ENCODE measurements at regions of chrX and their contacts with region 1.

Region 1: DNA sequence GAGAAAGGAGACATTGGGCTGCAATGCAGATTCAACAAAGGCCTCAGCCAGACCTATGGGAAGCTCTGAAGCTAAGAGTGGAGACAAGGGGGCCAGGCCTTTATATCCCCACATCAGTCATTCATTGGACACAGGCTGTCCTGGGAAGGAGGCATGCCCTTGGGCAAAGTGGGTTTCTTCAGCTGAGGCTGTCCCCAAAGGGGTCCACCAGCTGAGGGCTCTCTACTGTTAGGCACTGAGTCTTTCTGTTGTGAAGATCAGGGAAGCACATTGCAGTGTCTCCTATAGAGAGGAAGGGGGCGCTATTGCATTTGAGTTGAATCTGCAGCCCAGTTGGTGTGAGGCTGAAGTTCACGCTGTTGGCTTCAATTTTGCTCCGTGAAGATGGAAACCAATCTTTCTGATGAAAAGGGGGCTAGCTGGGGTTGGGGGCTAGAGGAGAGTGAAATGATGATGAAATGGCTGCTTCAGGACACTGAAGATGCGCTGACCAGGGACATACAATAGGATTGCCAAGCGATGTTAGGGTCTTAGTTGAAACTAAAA is 48.0 kb downstream of the SLC25A5 start:
- DNase-seq: peak in 8 of 9 experiments; percentile 6 to 75 (median 34)
- ATAC-seq: peak; percentile 96
- H3K4me3 ChIP-seq: no peak overlapping the region
- H3K4me3 Mint-ChIP-seq: no peak overlapping the region
- H3K27ac ChIP-seq: no peak overlapping the region
- H3K27ac Mint-ChIP-seq: no peak overlapping the region
- H3K4me1 ChIP-seq: no peaks in the 10 kb centered on the region
- H3K4me1 Mint-ChIP-seq: peaks cover 2% of the 10 kb centered on the region
- H3K27me3 ChIP-seq: no peaks in the 10 kb centered on the region
- H3K27me3 Mint-ChIP-seq: no peaks in the 10 kb centered on the region
- CTCF ChIP-seq: peak; percentile 64

Region 2: DNA sequence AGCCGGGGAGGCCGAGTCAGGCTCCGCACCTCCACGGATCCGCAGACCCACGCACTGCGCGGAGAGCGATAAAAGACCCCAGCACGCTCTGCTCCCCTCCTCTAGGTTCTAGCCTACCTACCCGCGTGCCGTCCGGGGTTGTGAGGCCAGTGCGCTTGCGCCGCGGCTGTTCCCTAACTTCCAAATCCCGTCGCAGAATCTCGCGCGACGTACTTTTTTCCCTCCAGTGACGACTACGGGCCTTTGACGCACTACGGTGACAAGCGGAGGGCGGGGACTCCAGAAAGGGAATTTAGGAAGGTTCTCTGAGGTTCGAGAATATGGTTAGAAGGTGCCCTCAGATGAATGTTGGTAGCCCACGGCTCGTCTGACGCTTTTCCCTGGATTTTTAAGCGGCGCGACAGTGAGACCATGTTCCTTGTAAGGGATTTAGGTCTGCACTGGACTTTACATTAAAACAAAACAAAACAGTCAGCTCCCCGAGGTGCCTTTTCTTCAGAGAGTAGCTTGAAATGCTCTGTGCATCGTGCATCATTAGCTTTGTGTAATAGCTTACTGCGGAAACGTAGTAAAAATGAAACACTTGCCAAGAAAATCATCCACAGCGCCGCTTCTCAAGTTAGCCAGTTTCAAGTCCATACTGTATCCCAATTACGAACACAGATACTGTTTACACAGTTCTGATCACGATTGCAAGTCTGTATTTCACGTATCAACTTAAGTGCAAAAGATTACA is 90.2 kb after region 1 on chrX and contains the start of gene NKRF:
- CTCF ChIA-PET with region 1: no interaction called
- POLR2A ChIA-PET with region 1: no interaction called
- intact Hi-C with region 1: loop called in 1 of 2 experiments (anchors 10 kb)
- DNase-seq: peak; percentile 79 to 96 (median 88)
- ATAC-seq: peak; percentile 76
- H3K4me3 ChIP-seq: peak within 1 kb of the TSS; percentile 89 to 90
- H3K4me3 Mint-ChIP-seq: peak within 1 kb of the TSS; percentile 87
- H3K27ac ChIP-seq: peak within 1 kb of the TSS; percentile 94 to 96
- H3K27ac Mint-ChIP-seq: peak within 1 kb of the TSS; percentile 97
- H3K4me1 ChIP-seq: peaks cover 7% of the 10 kb centered on the region
- H3K4me1 Mint-ChIP-seq: peaks cover 39% of the 10 kb centered on the region
- H3K27me3 ChIP-seq: no peaks in the 10 kb centered on the region
- H3K27me3 Mint-ChIP-seq: no peaks in the 10 kb centered on the region
- CTCF ChIP-seq: no peak
- total RNA-seq, gene NKRF: 18.3 to 20.5 TPM

Region 3: DNA sequence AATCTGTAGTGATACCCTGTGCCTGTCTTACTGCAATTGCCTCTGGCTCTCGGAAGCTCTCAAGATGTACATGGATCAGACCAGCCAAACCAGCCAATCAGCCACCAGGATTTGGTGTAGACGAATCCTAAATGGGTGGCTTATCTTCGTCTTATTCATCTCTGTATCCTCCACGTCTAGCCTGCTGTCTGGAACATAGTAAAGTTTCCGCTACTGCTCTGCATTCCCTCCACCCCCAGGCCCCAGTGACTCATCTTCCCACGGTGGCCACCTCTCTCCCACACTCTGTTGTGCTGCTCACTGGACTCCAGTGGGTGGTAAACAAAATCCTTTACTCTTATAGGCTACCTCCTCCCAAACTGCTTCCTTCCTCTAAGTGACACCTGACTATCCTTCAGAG is 138.9 kb after region 1 on chrX:
- CTCF ChIA-PET with region 1: no interaction called
- POLR2A ChIA-PET with region 1: no interaction called
- intact Hi-C with region 1: loop called in 1 of 2 experiments (anchors 5 kb)
- DNase-seq: peak in 7 of 9 experiments; percentile 12 to 48 (median 27)
- ATAC-seq: peak; percentile 32
- H3K4me3 ChIP-seq: no peak overlapping the region
- H3K4me3 Mint-ChIP-seq: peak overlapping the region; percentile 26
- H3K27ac ChIP-seq: no peak overlapping the region
- H3K27ac Mint-ChIP-seq: peak overlapping the region; percentile 87
- H3K4me1 ChIP-seq: peaks cover 21% of the 10 kb centered on the region
- H3K4me1 Mint-ChIP-seq: peaks cover 26% of the 10 kb centered on the region
- H3K27me3 ChIP-seq: no peaks in the 10 kb centered on the region
- H3K27me3 Mint-ChIP-seq: no peaks in the 10 kb centered on the region
- CTCF ChIP-seq: no peak

Region 4: GRCh38 chrX:119784747-119785446 is 268.7 kb after region 1 on chrX:
- CTCF ChIA-PET with region 1: interaction called, 3 read pairs
- POLR2A ChIA-PET with region 1: no interaction called
- intact Hi-C with region 1: loop called in 1 of 2 experiments (anchors 2 kb)
- DNase-seq: peak; percentile 2 to 67 (median 45)
- ATAC-seq: peak; percentile 79
- H3K4me3 ChIP-seq: no peak overlapping the region
- H3K4me3 Mint-ChIP-seq: no peak overlapping the region
- H3K27ac ChIP-seq: no peak overlapping the region
- H3K27ac Mint-ChIP-seq: no peak overlapping the region
- H3K4me1 ChIP-seq: peaks cover 23% of the 10 kb centered on the region
- H3K4me1 Mint-ChIP-seq: peaks cover 38% of the 10 kb centered on the region
- H3K27me3 ChIP-seq: no peaks in the 10 kb centered on the region
- H3K27me3 Mint-ChIP-seq: no peaks in the 10 kb centered on the region
- CTCF ChIP-seq: peak; percentile 47

Region 5: GRCh38 chrX:119880552-119881437 is 364.6 kb after region 1 on chrX:
- CTCF ChIA-PET with region 1: interaction called, 5 read pairs
- POLR2A ChIA-PET with region 1: no interaction called
- intact Hi-C with region 1: loop called (anchors 1 to 2 kb)
- DNase-seq: peak in 5 of 9 experiments; percentile 19 to 73 (median 39)
- ATAC-seq: peak; percentile 84
- H3K4me3 ChIP-seq: no peak overlapping the region
- H3K4me3 Mint-ChIP-seq: no peak overlapping the region
- H3K27ac ChIP-seq: no peak overlapping the region
- H3K27ac Mint-ChIP-seq: peak overlapping the region; percentile 81
- H3K4me1 ChIP-seq: peaks cover 5% of the 10 kb centered on the region
- H3K4me1 Mint-ChIP-seq: peaks cover 26% of the 10 kb centered on the region
- H3K27me3 ChIP-seq: no peaks in the 10 kb centered on the region
- H3K27me3 Mint-ChIP-seq: no peaks in the 10 kb centered on the region
- CTCF ChIP-seq: peak; percentile 51

Region 6: DNA sequence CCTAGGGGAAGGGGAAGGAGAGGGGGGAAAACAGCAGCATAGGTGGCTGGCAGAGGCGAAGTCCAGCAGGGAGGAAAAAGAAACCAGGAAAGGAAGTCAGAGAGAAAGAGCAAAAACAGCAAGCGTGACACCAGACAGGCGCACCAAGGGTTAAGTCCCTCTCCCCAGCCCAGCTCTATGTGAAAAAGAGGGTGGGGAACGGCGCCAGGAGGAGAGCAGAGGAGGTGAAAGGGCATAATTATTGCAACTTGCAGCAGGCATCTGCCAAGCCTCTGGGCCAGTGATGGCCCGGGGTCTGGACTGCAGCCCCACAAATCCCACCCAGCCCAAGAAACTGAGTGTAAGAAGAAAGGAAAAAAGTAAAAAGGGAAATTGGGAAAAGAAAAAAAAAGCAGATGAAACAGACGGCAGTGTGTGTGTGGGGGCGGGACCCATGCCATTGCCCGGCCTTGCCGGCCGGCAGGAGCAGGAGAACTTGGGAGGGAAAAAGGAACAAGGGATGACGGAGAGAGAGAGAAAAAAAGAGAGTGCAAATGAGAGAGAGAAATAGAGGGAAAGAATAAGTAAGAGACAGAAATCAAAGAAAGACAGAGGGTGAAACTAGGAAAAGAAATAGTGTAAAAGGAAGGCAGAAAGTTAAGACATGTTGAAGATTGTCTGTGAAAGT is 628.1 kb after region 1 on chrX:
- CTCF ChIA-PET with region 1: no interaction called
- POLR2A ChIA-PET with region 1: no interaction called
- intact Hi-C with region 1: loop called in 1 of 2 experiments (anchors 10 kb)
- DNase-seq: no peak
- ATAC-seq: no peak
- H3K4me3 ChIP-seq: no peak overlapping the region
- H3K4me3 Mint-ChIP-seq: no peak overlapping the region
- H3K27ac ChIP-seq: no peak overlapping the region
- H3K27ac Mint-ChIP-seq: no peak overlapping the region
- H3K4me1 ChIP-seq: no peaks in the 10 kb centered on the region
- H3K4me1 Mint-ChIP-seq: peaks cover 15% of the 10 kb centered on the region
- H3K27me3 ChIP-seq: no peaks in the 10 kb centered on the region
- H3K27me3 Mint-ChIP-seq: no peaks in the 10 kb centered on the region
- CTCF ChIP-seq: no peak